Heart right ventricle (tissue), 16 donors: ENCODE measurements at regions of chr1 and their contacts with region 1.

Region 1: DNA sequence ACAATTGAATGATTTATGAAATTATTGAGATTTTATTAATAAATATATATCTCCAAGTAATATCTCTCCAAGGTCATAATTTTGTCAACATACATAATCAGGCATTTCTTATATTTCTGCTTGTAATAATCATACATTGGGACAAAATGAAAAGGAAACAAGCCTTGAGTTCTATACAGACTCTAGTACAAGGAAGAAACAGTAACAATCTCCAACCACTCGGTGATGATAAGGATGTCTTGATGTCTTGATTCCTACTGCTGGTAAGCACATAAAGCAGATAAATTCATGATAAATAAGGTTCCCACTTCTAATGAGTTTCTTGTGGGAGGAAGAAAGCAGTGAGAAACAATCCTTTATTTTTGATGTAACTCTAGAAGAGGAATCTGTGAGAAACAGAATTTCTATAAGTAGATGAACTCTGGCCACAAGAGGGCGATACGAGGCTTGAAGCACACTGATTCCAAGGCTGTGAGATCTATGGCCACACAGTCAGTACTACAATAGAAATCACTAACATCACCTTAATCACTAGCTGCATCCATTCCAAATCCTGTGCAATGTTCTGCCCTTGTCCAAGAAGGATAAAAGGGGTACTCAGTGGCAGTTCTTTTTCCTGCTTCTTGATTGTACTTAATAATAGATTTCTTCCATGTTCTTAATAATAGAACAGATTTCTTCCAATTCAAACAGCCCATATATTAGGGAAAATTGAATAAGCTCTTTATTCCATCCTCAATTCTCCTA is 41.4 kb upstream of the LRRC8B start:
- DNase-seq: peak; percentile 36 to 88
- ATAC-seq: peak in 7 of 8 donors; percentile 71 to 88 (median 81)
- H3K4me3 ChIP-seq: no peak overlapping the region
- H3K27ac ChIP-seq: no peak overlapping the region
- H3K4me1 ChIP-seq: peaks cover 0 to 9% (median 0%) of the 10 kb centered on the region in 9 donors
- H3K27me3 ChIP-seq: no peaks in the 10 kb centered on the region
- CTCF ChIP-seq: peak; percentile 60 to 91 (median 83)

Region 2: GRCh38 chr1:89512996-89513720 is 30.0 kb after region 1 on chr1:
- intact Hi-C with region 1: no loop called
- DNase-seq: no peak
- ATAC-seq: no peak
- H3K4me3 ChIP-seq: no peak overlapping the region
- H3K27ac ChIP-seq: no peak overlapping the region
- H3K4me1 ChIP-seq: peaks cover 0 to 12% (median 3%) of the 10 kb centered on the region in 9 donors
- H3K27me3 ChIP-seq: no peaks in the 10 kb centered on the region
- CTCF ChIP-seq: no peak

Region 3: DNA sequence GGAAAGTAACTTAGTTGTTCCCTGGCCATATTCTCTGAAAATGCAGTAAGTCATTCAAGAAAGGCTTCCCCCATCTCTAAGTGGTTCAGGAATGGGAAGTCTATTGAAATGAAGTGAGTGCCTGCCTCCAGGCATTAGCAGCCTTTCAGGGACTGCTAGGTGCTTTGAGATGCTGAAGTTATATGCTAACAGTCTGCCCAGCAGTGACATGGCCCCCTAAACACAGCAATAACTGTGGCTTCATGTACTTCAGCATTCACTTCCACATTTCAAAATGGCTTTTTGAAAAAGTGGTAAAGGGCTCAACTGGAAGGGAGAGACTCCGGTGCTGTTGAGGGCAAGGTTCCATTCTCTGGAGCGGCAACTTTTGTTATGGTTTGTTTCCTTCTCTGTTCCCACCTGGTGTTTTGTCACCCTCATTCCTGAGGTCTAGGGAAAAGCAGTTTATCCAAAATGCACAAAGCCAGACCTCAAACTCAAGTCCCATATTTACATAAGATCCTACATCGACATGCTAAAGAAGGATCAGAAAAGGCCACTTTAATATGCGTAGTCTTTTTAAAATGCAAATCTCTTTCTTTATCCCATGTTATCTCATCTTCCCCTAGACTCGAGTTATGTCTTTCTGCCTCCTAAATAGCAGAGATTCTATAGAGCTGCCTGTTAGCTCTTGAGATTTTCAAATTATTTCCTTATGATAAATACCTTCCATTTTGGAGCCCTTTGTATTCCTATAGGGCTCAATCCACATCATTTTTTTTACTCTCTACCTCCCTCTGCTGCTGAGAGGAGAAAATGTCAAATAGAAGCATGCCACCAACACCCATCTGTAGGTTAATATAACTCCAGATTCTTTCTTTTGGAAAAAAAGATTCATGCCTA is 115.5 kb after region 1 on chr1:
- intact Hi-C with region 1: loop called (anchors 1 to 5 kb)
- DNase-seq: no peak
- ATAC-seq: peak in 5 of 8 donors; percentile 51 to 77 (median 74)
- H3K4me3 ChIP-seq: no peak overlapping the region
- H3K27ac ChIP-seq: no peak overlapping the region
- H3K4me1 ChIP-seq: peaks cover 0 to 19% (median 13%) of the 10 kb centered on the region in 9 donors
- H3K27me3 ChIP-seq: no peaks in the 10 kb centered on the region
- CTCF ChIP-seq: peak; percentile 43 to 81 (median 71)

Region 4: DNA sequence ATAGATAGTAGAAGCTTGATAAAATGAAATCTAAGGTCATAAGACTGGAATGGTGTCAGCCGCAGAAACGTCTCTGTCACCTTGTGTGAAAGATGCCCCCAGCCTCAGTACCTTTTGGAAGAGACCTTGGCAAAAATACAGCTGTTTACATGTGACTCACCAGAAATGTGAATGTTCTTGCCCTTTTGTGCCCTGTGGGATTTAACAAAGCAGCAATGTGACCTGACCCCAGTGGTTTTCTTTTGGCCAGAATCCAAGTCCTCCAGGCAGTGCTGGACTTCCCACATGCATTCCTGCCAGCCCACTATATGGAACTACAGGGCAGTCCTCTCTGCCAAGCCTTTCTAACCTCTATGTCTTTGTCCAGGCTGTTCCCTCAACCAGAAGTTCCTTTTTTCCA is 122.5 kb after region 1 on chr1:
- intact Hi-C with region 1: loop called in 2 of 10 experiments (anchors 2 to 5 kb)
- DNase-seq: no peak
- ATAC-seq: no peak
- H3K4me3 ChIP-seq: no peak overlapping the region
- H3K27ac ChIP-seq: peak overlapping the region in 4 of 10 donors; percentile 25 to 81 (median 40)
- H3K4me1 ChIP-seq: peaks cover 11 to 82% (median 69%) of the 10 kb centered on the region in 9 donors
- H3K27me3 ChIP-seq: no peaks in the 10 kb centered on the region
- CTCF ChIP-seq: no peak

Region 5: GRCh38 chr1:89987170-89987819 is 504.1 kb after region 1 on chr1:
- intact Hi-C with region 1: loop called in 3 of 10 experiments (anchors 10 kb)
- DNase-seq: peak in 1 of 2 donors; percentile 64
- ATAC-seq: peak; percentile 69 to 93 (median 90)
- H3K4me3 ChIP-seq: no peak overlapping the region
- H3K27ac ChIP-seq: no peak overlapping the region
- H3K4me1 ChIP-seq: peaks cover 0 to 18% (median 0%) of the 10 kb centered on the region in 9 donors
- H3K27me3 ChIP-seq: no peaks in the 10 kb centered on the region
- CTCF ChIP-seq: peak; percentile 74 to 92 (median 90)